ENCODE measurements at regions of chr16 and their contacts with region 1.

Region 1: GRCh38 chr16:2500918-2501750 is 12.6 kb upstream of the ATP6V0C start:
- DNase-seq: peak; percentile 94
- H3K4me3 Mint-ChIP-seq: no peak overlapping the region
- H3K27ac Mint-ChIP-seq: no peak overlapping the region
- H3K4me1 Mint-ChIP-seq: no peaks in the 10 kb centered on the region
- H3K27me3 Mint-ChIP-seq: no peaks in the 10 kb centered on the region

Region 2: GRCh38 chr16:2267913-2268666 is 233.0 kb before region 1 on chr16 and contains the start of gene RNPS1:
- intact Hi-C with region 1: loop called (anchors 1 kb)
- DNase-seq: peak; percentile 99
- H3K4me3 Mint-ChIP-seq: peak within 1 kb of the TSS; percentile 94
- H3K27ac Mint-ChIP-seq: peak within 1 kb of the TSS; percentile 97
- H3K4me1 Mint-ChIP-seq: peaks cover 27% of the 10 kb centered on the region
- H3K27me3 Mint-ChIP-seq: peaks cover 1% of the 10 kb centered on the region
- total RNA-seq, gene RNPS1: 399 and 416 TPM in 2 replicates

Region 3: GRCh38 chr16:2340564-2341455 is 160.3 kb before region 1 on chr16 and contains the start of gene ABCA3:
- intact Hi-C with region 1: loop called (anchors 1 kb)
- DNase-seq: peak; percentile 100
- H3K4me3 Mint-ChIP-seq: peak within 1 kb of the TSS; percentile 93
- H3K27ac Mint-ChIP-seq: peak within 1 kb of the TSS; percentile 82
- H3K4me1 Mint-ChIP-seq: peaks cover 16% of the 10 kb centered on the region
- H3K27me3 Mint-ChIP-seq: peaks cover 32% of the 10 kb centered on the region
- total RNA-seq, gene ABCA3: 8.3 and 9.2 TPM in 2 replicates

Region 4: GRCh38 chr16:2474877-2475412 is 26.2 kb before region 1 on chr16 and contains the start of gene TBC1D24:
- intact Hi-C with region 1: loop called (anchors 2 kb)
- DNase-seq: peak; percentile 95
- H3K4me3 Mint-ChIP-seq: peak within 1 kb of the TSS; percentile 80
- H3K27ac Mint-ChIP-seq: peak within 1 kb of the TSS; percentile 77
- H3K4me1 Mint-ChIP-seq: peaks cover 12% of the 10 kb centered on the region
- H3K27me3 Mint-ChIP-seq: peaks cover 25% of the 10 kb centered on the region
- total RNA-seq, gene TBC1D24: 16.6 and 20.9 TPM in 2 replicates

Region 5: GRCh38 chr16:2603165-2604015 is 102.3 kb after region 1 on chr16:
- intact Hi-C with region 1: no loop called
- DNase-seq: peak; percentile 95
- H3K4me3 Mint-ChIP-seq: peak overlapping the region; percentile 98
- H3K27ac Mint-ChIP-seq: peak overlapping the region; percentile 94
- H3K4me1 Mint-ChIP-seq: peaks cover 15% of the 10 kb centered on the region
- H3K27me3 Mint-ChIP-seq: no peaks in the 10 kb centered on the region

Measured in activated CD4-positive, alpha-beta T cell treated with anti-CD3 and anti-CD28 coated beads, Interleukin-2, amount 10 ng/mL, durations not matched to agents 24 days and 14 days (primary cell).